ENCODE measurements at regions of chr2 and their contacts with region 1.

Region 1: DNA sequence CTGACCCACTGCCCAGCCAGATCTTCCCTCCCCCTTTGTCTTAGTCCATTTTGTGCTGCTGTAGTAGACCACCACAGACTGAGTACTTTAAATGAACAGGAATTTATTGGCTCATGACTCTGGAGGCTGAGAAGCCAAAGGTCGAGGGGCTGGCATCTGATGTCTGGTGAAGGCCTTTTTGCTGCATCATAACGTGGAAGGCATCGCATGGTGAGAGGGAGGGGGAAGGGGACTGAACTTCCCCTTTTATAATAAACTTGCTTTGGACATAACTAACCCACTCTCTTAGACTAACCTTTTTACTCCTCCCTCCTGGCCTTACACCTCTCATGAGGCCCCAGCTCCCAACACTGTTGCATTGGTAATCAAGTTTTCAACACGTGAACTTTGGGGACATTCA is 83.8 kb downstream of the MAP4K4 start:
- DNase-seq: no peak
- ATAC-seq: peak; percentile 22
- H3K4me3 Mint-ChIP-seq: no peak overlapping the region
- H3K27ac Mint-ChIP-seq: peak overlapping the region; percentile 14
- H3K4me1 Mint-ChIP-seq: peaks cover 74% of the 10 kb centered on the region
- H3K27me3 Mint-ChIP-seq: no peaks in the 10 kb centered on the region
- CTCF ChIP-seq: no peak

Region 2: DNA sequence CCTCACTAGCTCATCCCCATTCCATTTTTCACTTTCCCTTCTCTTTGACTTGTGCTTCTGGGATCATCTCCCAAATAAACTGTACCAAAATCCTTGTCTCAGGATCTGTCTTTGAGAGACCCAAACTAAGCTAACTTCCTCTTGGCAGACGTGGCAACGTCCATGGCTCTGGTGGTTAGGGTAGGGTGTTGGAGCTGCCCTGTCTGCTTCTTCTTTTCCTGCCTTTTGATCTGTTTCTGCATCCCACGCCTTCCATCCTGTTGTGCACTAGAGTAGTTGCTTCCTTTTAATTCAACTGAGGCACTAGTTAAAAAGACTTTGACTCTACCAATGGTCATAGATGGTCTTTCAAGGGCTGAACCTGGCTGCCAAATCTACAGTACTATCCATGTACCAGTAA is 89.3 kb before region 1 on chr2:
- CTCF ChIA-PET with region 1: no interaction called
- POLR2A ChIA-PET with region 1: no interaction called
- intact Hi-C with region 1: no loop called
- DNase-seq: no peak
- ATAC-seq: peak; percentile 29
- H3K4me3 Mint-ChIP-seq: no peak overlapping the region
- H3K27ac Mint-ChIP-seq: no peak overlapping the region
- H3K4me1 Mint-ChIP-seq: peaks cover 33% of the 10 kb centered on the region
- H3K27me3 Mint-ChIP-seq: peaks cover 2% of the 10 kb centered on the region
- CTCF ChIP-seq: no peak

Region 3: GRCh38 chr2:101751875-101752619 is 29.3 kb before region 1 on chr2:
- CTCF ChIA-PET with region 1: no interaction called
- POLR2A ChIA-PET with region 1: no interaction called
- intact Hi-C with region 1: loop called (anchors 1 kb)
- DNase-seq: no peak
- ATAC-seq: no peak
- H3K4me3 Mint-ChIP-seq: no peak overlapping the region
- H3K27ac Mint-ChIP-seq: no peak overlapping the region
- H3K4me1 Mint-ChIP-seq: peaks cover 67% of the 10 kb centered on the region
- H3K27me3 Mint-ChIP-seq: no peaks in the 10 kb centered on the region
- CTCF ChIP-seq: no peak

Region 4: GRCh38 chr2:101770726-101771125 is 10.6 kb before region 1 on chr2:
- CTCF ChIA-PET with region 1: interaction called, 17 read pairs
- POLR2A ChIA-PET with region 1: interaction called, 4 read pairs
- intact Hi-C with region 1: no loop called
- DNase-seq: peak; percentile 49
- ATAC-seq: peak; percentile 31
- H3K4me3 Mint-ChIP-seq: no peak overlapping the region
- H3K27ac Mint-ChIP-seq: no peak overlapping the region
- H3K4me1 Mint-ChIP-seq: peaks cover 82% of the 10 kb centered on the region
- H3K27me3 Mint-ChIP-seq: no peaks in the 10 kb centered on the region
- CTCF ChIP-seq: peak; percentile 47